ENCODE measurements at regions of chr14 and their contacts with region 1.

Region 1: DNA sequence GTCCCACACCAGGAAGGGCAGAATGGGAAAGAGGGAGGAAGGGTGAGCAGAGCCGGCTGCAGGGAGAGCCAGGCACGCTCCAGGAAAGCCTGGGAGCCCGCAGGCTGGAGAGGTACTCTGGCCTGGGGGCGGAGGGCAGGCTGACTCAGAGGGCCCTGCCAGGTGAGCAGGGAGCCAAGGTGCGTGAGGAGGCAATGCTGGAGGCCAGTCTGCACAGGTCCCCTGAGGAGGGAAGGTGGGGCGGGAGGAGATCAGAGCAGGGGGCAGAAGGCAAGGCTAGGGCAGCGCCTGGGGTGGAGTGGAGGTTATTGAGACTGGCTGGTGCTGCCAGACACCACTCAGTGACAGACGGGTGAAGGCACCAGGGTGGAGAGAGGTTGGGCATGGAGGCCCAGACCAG is 385.0 kb downstream of the BCL11B start:
- DNase-seq: peak; percentile 62
- H3K4me3 ChIP-seq: no peak overlapping the region
- H3K27ac ChIP-seq: no peak overlapping the region
- H3K4me1 ChIP-seq: peaks cover 6% of the 10 kb centered on the region
- H3K27me3 ChIP-seq: no peaks in the 10 kb centered on the region
- CTCF ChIP-seq: no peak

Region 2: DNA sequence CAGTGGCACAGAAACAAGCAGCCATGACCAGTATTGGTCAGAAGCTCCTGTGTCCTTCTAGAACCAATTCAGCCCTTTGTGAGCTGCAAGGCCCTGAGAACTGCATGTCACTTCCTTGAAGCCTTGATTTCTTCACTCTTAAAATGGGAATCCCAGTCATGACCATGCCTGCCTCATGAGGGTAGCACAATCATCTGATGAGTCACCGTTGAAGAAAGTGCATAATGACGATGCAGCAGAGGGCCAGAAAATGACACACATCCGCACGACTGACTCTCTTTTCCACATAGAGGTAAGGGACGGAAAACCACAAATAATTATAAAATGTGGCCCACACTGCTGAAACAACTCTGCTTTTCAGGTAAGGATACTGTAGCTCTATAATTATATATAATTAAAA is 392.4 kb before region 1 on chr14:
- CTCF ChIA-PET with region 1: no interaction called
- dilution Hi-C with region 1: no loop called
- in situ Hi-C with region 1: no loop called
- intact Hi-C with region 1: loop called (anchors 10 kb)
- DNase-seq: peak; percentile 94
- H3K4me3 ChIP-seq: no peak overlapping the region
- H3K27ac ChIP-seq: peak overlapping the region; percentile 87
- H3K4me1 ChIP-seq: peaks cover 39% of the 10 kb centered on the region
- H3K27me3 ChIP-seq: no peaks in the 10 kb centered on the region
- CTCF ChIP-seq: peak in 1 of 2 donors; percentile 23

Region 3: GRCh38 chr14:98931911-98932310 is 44.9 kb after region 1 on chr14:
- CTCF ChIA-PET with region 1: no interaction called
- dilution Hi-C with region 1: no loop called
- in situ Hi-C with region 1: no loop called
- intact Hi-C with region 1: no loop called
- DNase-seq: no peak
- H3K4me3 ChIP-seq: no peak overlapping the region
- H3K27ac ChIP-seq: no peak overlapping the region
- H3K4me1 ChIP-seq: no peaks in the 10 kb centered on the region
- H3K27me3 ChIP-seq: no peaks in the 10 kb centered on the region
- CTCF ChIP-seq: no peak

Measured in mammary epithelial cell (primary cell).